Panc1 (cell line): ENCODE measurements at regions of chr17 and their contacts with region 1.

Region 1: GRCh38 chr17:7989781-7990655 is 12.4 kb upstream of the GUCY2D start:
- DNase-seq: no peak
- ATAC-seq: peak; percentile 93
- H3K4me3 ChIP-seq: peak overlapping the region; percentile 53 to 54
- H3K27ac ChIP-seq: no peak overlapping the region
- H3K4me1 ChIP-seq: no peaks in the 10 kb centered on the region
- H3K27me3 ChIP-seq: no peaks in the 10 kb centered on the region
- CTCF ChIP-seq: peak; percentile 97

Region 2: DNA sequence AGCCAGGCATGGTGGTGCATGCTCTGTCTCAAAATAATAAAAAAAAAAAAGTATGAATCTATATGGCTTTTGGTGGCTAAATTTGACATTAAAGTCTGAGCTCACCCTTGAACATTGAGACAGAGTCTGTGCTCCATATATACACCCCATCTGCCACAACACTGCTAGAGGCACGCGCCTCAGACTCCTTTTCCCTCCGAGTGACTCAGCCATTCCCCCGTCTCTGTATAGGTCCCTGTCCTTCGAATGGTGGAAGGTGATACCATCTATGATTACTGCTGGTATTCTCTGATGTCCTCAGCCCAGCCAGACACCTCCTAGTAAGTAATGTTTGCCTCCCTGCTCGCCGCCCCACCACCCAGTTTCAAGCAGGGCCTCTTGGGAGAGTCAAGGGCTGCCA is 289.5 kb before region 1 on chr17:
- CTCF ChIA-PET with region 1: no interaction called
- POLR2A ChIA-PET with region 1: no interaction called
- in situ Hi-C with region 1: no loop called
- intact Hi-C with region 1: no loop called
- DNase-seq: no peak
- ATAC-seq: no peak
- H3K4me3 ChIP-seq: no peak overlapping the region
- H3K27ac ChIP-seq: no peak overlapping the region
- H3K4me1 ChIP-seq: peaks cover 10% of the 10 kb centered on the region; the same call in 1 of the 2 replicates
- H3K27me3 ChIP-seq: no peaks in the 10 kb centered on the region
- CTCF ChIP-seq: no peak

Region 3: GRCh38 chr17:7912927-7913524 is 77.0 kb before region 1 on chr17:
- CTCF ChIA-PET with region 1: interaction called, 8 read pairs
- POLR2A ChIA-PET with region 1: no interaction called
- in situ Hi-C with region 1: no loop called
- intact Hi-C with region 1: loop called (anchors 1 kb)
- DNase-seq: peak; percentile 73
- ATAC-seq: no peak
- H3K4me3 ChIP-seq: no peak overlapping the region
- H3K27ac ChIP-seq: no peak overlapping the region
- H3K4me1 ChIP-seq: peaks cover 10% of the 10 kb centered on the region
- H3K27me3 ChIP-seq: no peaks in the 10 kb centered on the region
- CTCF ChIP-seq: peak; percentile 84

Region 4: GRCh38 chr17:8057691-8058114 is 67.7 kb after region 1 on chr17:
- CTCF ChIA-PET with region 1: interaction called, 3 read pairs
- POLR2A ChIA-PET with region 1: no interaction called
- in situ Hi-C with region 1: no loop called
- intact Hi-C with region 1: loop called (anchors 10 kb)
- DNase-seq: peak; percentile 75
- ATAC-seq: peak; percentile 89
- H3K4me3 ChIP-seq: peak overlapping the region; percentile 12; a peak in 3 of 4 replicates
- H3K27ac ChIP-seq: no peak overlapping the region
- H3K4me1 ChIP-seq: peaks cover 10% of the 10 kb centered on the region
- H3K27me3 ChIP-seq: peaks cover 4% of the 10 kb centered on the region
- CTCF ChIP-seq: peak; percentile 84